K562 (cell line): ENCODE measurements at regions of chr3 and their contacts with region 1.

Region 1: GRCh38 chr3:65342084-65342683 is 654.4 kb upstream of the ADAMTS9 start:
- DNase-seq: peak; percentile 61 to 75 (median 62)
- ATAC-seq: peak; percentile 99
- H3K4me3 ChIP-seq: no peak overlapping the region
- H3K27ac ChIP-seq: no peak overlapping the region
- H3K4me1 ChIP-seq: peaks cover 0 to 6% of the 10 kb centered on the region in 2 experiments; a peak in 3 of 5 replicates
- H3K27me3 ChIP-seq: no peaks in the 10 kb centered on the region; a peak in 2 of 5 replicates
- CTCF ChIP-seq: peak; percentile 72 to 81 (median 72)
- EP300 ChIP-seq: no peak
- POLR2A ChIP-seq: no peak
- RAD21 ChIP-seq: peak; percentile 27 to 69

Region 2: GRCh38 chr3:64957408-64958198 is 384.6 kb before region 1 on chr3:
- CTCF ChIA-PET with region 1: no interaction called
- POLR2A ChIA-PET with region 1: no interaction called
- in situ Hi-C with region 1: no loop called
- intact Hi-C with region 1: no loop called
- DNase-seq: no peak
- ATAC-seq: no peak
- H3K4me3 ChIP-seq: no peak overlapping the region
- H3K27ac ChIP-seq: no peak overlapping the region
- H3K4me1 ChIP-seq: peaks cover 0 to 8% of the 10 kb centered on the region in 2 experiments; a peak in 2 of 5 replicates
- H3K27me3 ChIP-seq: no peaks in the 10 kb centered on the region
- CTCF ChIP-seq: no peak
- EP300 ChIP-seq: no peak
- POLR2A ChIP-seq: no peak
- RAD21 ChIP-seq: no peak

Region 3: GRCh38 chr3:65551945-65552344 is 209.8 kb after region 1 on chr3:
- CTCF ChIA-PET with region 1: no interaction called
- POLR2A ChIA-PET with region 1: no interaction called
- in situ Hi-C with region 1: no loop called
- intact Hi-C with region 1: no loop called
- DNase-seq: no peak
- ATAC-seq: no peak
- H3K4me3 ChIP-seq: no peak overlapping the region
- H3K27ac ChIP-seq: no peak overlapping the region
- H3K4me1 ChIP-seq: peaks cover 0 to 8% of the 10 kb centered on the region in 2 experiments; a peak in 3 of 5 replicates
- H3K27me3 ChIP-seq: no peaks in the 10 kb centered on the region
- CTCF ChIP-seq: no peak
- EP300 ChIP-seq: no peak
- POLR2A ChIP-seq: no peak
- RAD21 ChIP-seq: no peak

Region 4: GRCh38 chr3:65751123-65751700 is 409.0 kb after region 1 on chr3:
- CTCF ChIA-PET with region 1: interaction called, 3 read pairs
- POLR2A ChIA-PET with region 1: no interaction called
- in situ Hi-C with region 1: loop called (anchors 10 kb)
- intact Hi-C with region 1: loop called (anchors 1 kb)
- DNase-seq: peak; percentile 26 to 59 (median 40)
- ATAC-seq: peak; percentile 86
- H3K4me3 ChIP-seq: no peak overlapping the region
- H3K27ac ChIP-seq: no peak overlapping the region
- H3K4me1 ChIP-seq: no peaks in the 10 kb centered on the region
- H3K27me3 ChIP-seq: no peaks in the 10 kb centered on the region
- CTCF ChIP-seq: peak; percentile 52 to 67 (median 60)
- EP300 ChIP-seq: no peak
- POLR2A ChIP-seq: no peak
- RAD21 ChIP-seq: peak; percentile 40 to 64